CD8-positive, alpha-beta T cell (primary cell): ENCODE measurements at regions of chr10 and their contacts with region 1.

Region 1: GRCh38 chr10:5623081-5623748 is 43.2 kb downstream of the ASB13 start:
- DNase-seq: peak; percentile 50 to 84 (median 77)
- ATAC-seq: peak; percentile 98
- H3K4me3 ChIP-seq: no peak overlapping the region
- H3K4me3 Mint-ChIP-seq: no peak overlapping the region
- H3K27ac ChIP-seq: no peak overlapping the region
- H3K27ac Mint-ChIP-seq: no peak overlapping the region
- H3K4me1 ChIP-seq: peaks cover 4% of the 10 kb centered on the region
- H3K4me1 Mint-ChIP-seq: no peaks in the 10 kb centered on the region
- H3K27me3 ChIP-seq: no peaks in the 10 kb centered on the region
- H3K27me3 Mint-ChIP-seq: no peaks in the 10 kb centered on the region
- CTCF ChIP-seq: peak; percentile 85

Region 2: GRCh38 chr10:5423771-5424170 is 199.4 kb before region 1 on chr10:
- CTCF ChIA-PET with region 1: interaction called, 10 read pairs
- POLR2A ChIA-PET with region 1: no interaction called
- intact Hi-C with region 1: no loop called
- DNase-seq: no peak
- ATAC-seq: no peak
- H3K4me3 ChIP-seq: no peak overlapping the region
- H3K4me3 Mint-ChIP-seq: no peak overlapping the region
- H3K27ac ChIP-seq: no peak overlapping the region
- H3K27ac Mint-ChIP-seq: no peak overlapping the region
- H3K4me1 ChIP-seq: no peaks in the 10 kb centered on the region
- H3K4me1 Mint-ChIP-seq: no peaks in the 10 kb centered on the region
- H3K27me3 ChIP-seq: no peaks in the 10 kb centered on the region
- H3K27me3 Mint-ChIP-seq: no peaks in the 10 kb centered on the region
- CTCF ChIP-seq: no peak

Region 3: DNA sequence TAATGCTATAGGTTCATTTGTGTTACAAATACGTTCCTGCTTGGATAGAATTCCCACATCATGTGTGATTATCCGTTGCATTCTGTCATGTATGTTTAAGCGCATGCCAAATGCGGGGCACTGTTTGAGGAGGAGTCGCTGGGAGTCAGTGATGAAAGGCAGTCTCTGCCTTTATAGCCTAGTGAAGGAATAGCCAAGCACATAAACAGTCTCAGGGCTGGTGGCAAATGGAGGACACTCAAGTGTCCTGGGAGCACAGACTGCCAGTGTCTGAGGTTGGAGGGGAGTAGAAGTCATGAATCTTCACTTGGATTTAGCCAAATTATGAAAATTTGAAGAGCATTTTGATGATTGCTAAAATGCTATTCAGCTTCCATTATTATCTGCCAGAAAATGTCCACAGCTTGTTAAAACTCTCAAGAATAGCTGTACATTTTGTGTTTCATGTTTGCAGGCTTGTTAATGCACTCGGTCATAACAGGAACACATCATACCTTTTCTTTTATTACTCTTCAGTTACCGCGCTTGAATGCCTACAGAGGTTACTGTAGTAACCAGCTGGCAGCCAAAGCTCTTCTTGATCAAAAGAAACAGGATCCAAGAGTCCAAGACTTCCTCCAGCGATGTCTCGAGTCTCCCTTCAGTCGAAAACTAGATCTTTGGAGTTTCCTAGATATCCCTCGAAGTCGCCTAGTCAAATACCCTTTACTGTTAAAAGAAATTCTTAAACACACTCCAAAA is 169.3 kb before region 1 on chr10:
- CTCF ChIA-PET with region 1: interaction called, 377 read pairs
- POLR2A ChIA-PET with region 1: interaction called, 4 read pairs
- intact Hi-C with region 1: no loop called
- DNase-seq: no peak
- ATAC-seq: no peak
- H3K4me3 ChIP-seq: no peak overlapping the region
- H3K4me3 Mint-ChIP-seq: no peak overlapping the region
- H3K27ac ChIP-seq: no peak overlapping the region
- H3K27ac Mint-ChIP-seq: no peak overlapping the region
- H3K4me1 ChIP-seq: peaks cover 13% of the 10 kb centered on the region
- H3K4me1 Mint-ChIP-seq: peaks cover 16% of the 10 kb centered on the region
- H3K27me3 ChIP-seq: no peaks in the 10 kb centered on the region
- H3K27me3 Mint-ChIP-seq: no peaks in the 10 kb centered on the region
- CTCF ChIP-seq: no peak